Cardiac septum (tissue), 1 donor: ENCODE measurements at regions of chr22 and their contacts with region 1.

Region 1: GRCh38 chr22:46317646-46318045 is 17.9 kb upstream of the TRMU start:
- DNase-seq: no peak

Region 2: DNA sequence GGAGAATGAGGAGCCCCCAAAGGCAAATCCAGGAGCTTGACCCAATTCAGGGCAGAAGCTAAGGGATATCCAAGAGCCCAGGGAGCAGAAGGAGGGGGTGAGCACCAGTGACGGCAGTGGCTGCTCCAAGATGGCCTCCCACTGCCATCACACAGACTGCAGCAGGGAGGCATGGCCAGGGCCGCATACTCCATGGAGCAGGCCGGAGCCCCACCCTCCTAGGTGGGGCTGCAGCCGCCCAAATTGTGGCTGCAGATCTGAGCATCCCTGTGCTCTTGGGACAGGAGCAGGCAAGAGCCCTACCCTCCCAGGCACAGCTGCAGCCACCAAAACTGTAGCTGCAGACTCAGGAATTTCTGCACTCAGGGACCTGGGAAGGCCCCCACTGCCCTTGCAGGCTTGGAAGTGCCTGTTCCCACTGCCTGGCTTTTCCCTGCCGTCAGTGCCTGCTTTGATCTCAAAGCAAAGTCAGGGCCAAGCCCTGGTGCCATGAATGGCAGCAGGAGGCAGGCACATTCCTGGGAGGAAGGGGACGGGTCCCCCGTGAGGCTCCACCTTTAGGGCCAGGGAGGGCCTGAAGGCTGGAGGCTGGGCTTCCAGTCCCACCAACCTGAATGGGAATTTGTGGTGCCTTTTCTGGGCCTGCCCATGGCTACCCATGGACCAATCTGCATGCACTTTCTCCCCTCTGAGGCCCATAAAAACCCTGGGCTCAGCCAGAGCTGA is 330.3 kb before region 1 on chr22:
- intact Hi-C with region 1: loop called (anchors 5 kb)
- DNase-seq: no peak

Region 3: GRCh38 chr22:46245511-46245910 is 72.1 kb before region 1 on chr22:
- intact Hi-C with region 1: no loop called
- DNase-seq: peak; percentile 91